WTC11 (cell line): ENCODE measurements at regions of chr19 and their contacts with region 1.

Region 1: DNA sequence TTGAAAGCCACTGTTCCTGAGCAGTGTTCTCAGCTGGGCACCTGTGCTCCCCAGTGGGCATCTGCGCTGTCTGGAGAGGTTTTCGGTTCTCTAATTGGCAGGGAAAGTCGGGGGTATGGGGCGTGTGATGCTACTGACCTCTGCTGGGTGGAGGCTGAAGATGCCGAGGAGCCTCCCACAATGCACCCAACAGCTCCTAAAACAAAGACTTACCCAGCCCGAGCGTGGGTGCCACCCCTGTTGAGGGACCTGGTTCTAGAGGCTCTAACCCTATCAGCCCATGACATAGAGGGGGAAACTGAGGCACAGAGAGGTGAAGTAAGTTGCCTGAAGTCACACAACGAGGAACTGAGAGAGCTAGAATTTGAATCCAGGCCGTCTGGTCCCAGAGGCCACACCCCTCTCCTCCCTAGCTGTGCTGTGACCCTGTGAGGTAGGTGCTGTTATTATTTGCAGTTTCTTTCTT is 2.3 kb downstream of the SPACA4 start:
- DNase-seq: peak; percentile 63
- ATAC-seq: peak; percentile 84
- H3K4me3 Mint-ChIP-seq: peak overlapping the region; percentile 37; the same call in 1 of the 2 replicates
- H3K27ac Mint-ChIP-seq: no peak overlapping the region
- H3K4me1 Mint-ChIP-seq: peaks cover 4% of the 10 kb centered on the region
- H3K27me3 Mint-ChIP-seq: no peaks in the 10 kb centered on the region
- CTCF ChIP-seq: no peak

Region 2: GRCh38 chr19:48501496-48502350 is 107.1 kb before region 1 on chr19:
- CTCF ChIA-PET with region 1: interaction called, 31 read pairs
- POLR2A ChIA-PET with region 1: no interaction called
- DNase-seq: peak; percentile 100
- ATAC-seq: peak; percentile 87
- H3K4me3 Mint-ChIP-seq: peak overlapping the region; percentile 67
- H3K27ac Mint-ChIP-seq: peak overlapping the region; percentile 98
- H3K4me1 Mint-ChIP-seq: peaks cover 15% of the 10 kb centered on the region
- H3K27me3 Mint-ChIP-seq: peaks cover 6% of the 10 kb centered on the region
- CTCF ChIP-seq: no peak

Region 3: GRCh38 chr19:48618916-48619691 is 10.3 kb after region 1 on chr19 and contains the starts of genes RPL18 and SPHK2:
- CTCF ChIA-PET with region 1: interaction called, 12 read pairs
- POLR2A ChIA-PET with region 1: interaction called, 16 read pairs
- DNase-seq: peak; percentile 96
- ATAC-seq: peak; percentile 65
- H3K4me3 Mint-ChIP-seq: peak within 1 kb of the TSS; percentile 99
- H3K27ac Mint-ChIP-seq: peak within 1 kb of the TSS; percentile 100
- H3K4me1 Mint-ChIP-seq: peaks cover 60% of the 10 kb centered on the region
- H3K27me3 Mint-ChIP-seq: no peaks in the 10 kb centered on the region; the same call in 1 of the 2 replicates
- CTCF ChIP-seq: no peak
- total RNA-seq, gene RPL18: 1,712 to 1,987 TPM (median 1,909 TPM) in 3 replicates
- total RNA-seq, gene SPHK2: 46.7 to 64.6 TPM (median 48.4 TPM) in 3 replicates

Region 4: GRCh38 chr19:48624067-48624594 is 15.3 kb after region 1 on chr19:
- CTCF ChIA-PET with region 1: interaction called, 12 read pairs
- POLR2A ChIA-PET with region 1: interaction called, 16 read pairs
- DNase-seq: peak; percentile 100
- ATAC-seq: peak; percentile 83
- H3K4me3 Mint-ChIP-seq: peak overlapping the region; percentile 73
- H3K27ac Mint-ChIP-seq: peak overlapping the region; percentile 97
- H3K4me1 Mint-ChIP-seq: peaks cover 25% of the 10 kb centered on the region
- H3K27me3 Mint-ChIP-seq: no peaks in the 10 kb centered on the region; the same call in 1 of the 2 replicates
- CTCF ChIP-seq: no peak

Region 5: GRCh38 chr19:48630296-48631063 is 21.6 kb after region 1 on chr19:
- CTCF ChIA-PET with region 1: interaction called, 13 read pairs
- POLR2A ChIA-PET with region 1: interaction called, 18 read pairs
- DNase-seq: peak; percentile 72
- ATAC-seq: peak; percentile 11
- H3K4me3 Mint-ChIP-seq: peak overlapping the region; percentile 71
- H3K27ac Mint-ChIP-seq: peak overlapping the region; percentile 99
- H3K4me1 Mint-ChIP-seq: peaks cover 32% of the 10 kb centered on the region
- H3K27me3 Mint-ChIP-seq: no peaks in the 10 kb centered on the region
- CTCF ChIP-seq: no peak

Region 6: GRCh38 chr19:48646001-48646721 is 37.3 kb after region 1 on chr19 and contains the start of gene CA11:
- CTCF ChIA-PET with region 1: no interaction called
- POLR2A ChIA-PET with region 1: no interaction called
- DNase-seq: peak; percentile 97
- ATAC-seq: peak; percentile 85
- H3K4me3 Mint-ChIP-seq: peak within 1 kb of the TSS; percentile 85
- H3K27ac Mint-ChIP-seq: peak within 1 kb of the TSS; percentile 84
- H3K4me1 Mint-ChIP-seq: peaks cover 9% of the 10 kb centered on the region
- H3K27me3 Mint-ChIP-seq: no peaks in the 10 kb centered on the region; the same call in none of the 2 replicates
- CTCF ChIP-seq: peak; percentile 72
- total RNA-seq, gene CA11: 41.4 to 53.7 TPM (median 47.5 TPM) in 3 replicates

Region 7: GRCh38 chr19:48780631-48781391 is 172.0 kb after region 1 on chr19:
- CTCF ChIA-PET with region 1: no interaction called
- POLR2A ChIA-PET with region 1: no interaction called
- DNase-seq: no peak
- ATAC-seq: no peak
- H3K4me3 Mint-ChIP-seq: no peak overlapping the region
- H3K27ac Mint-ChIP-seq: no peak overlapping the region
- H3K4me1 Mint-ChIP-seq: peaks cover 2% of the 10 kb centered on the region; the same call in 1 of the 2 replicates
- H3K27me3 Mint-ChIP-seq: peaks cover 8% of the 10 kb centered on the region
- CTCF ChIP-seq: no peak